ENCODE measurements at regions of chr9 and their contacts with region 1.

Region 1: GRCh38 chr9:34591248-34591916 is 1.9 kb upstream of the CNTFR start:
- DNase-seq: peak; percentile 84 to 91
- ATAC-seq: peak; percentile 84 to 95
- H3K4me3 ChIP-seq: no peak overlapping the region
- H3K27ac ChIP-seq: no peak overlapping the region
- H3K4me1 ChIP-seq: peaks cover 7% of the 10 kb centered on the region; the same call in 2 of the 3 replicates
- CTCF ChIP-seq: peak; percentile 81
- EP300 ChIP-seq: no peak
- POLR2A ChIP-seq: no peak
- RAD21 ChIP-seq: peak; percentile 89 to 94

Region 2: DNA sequence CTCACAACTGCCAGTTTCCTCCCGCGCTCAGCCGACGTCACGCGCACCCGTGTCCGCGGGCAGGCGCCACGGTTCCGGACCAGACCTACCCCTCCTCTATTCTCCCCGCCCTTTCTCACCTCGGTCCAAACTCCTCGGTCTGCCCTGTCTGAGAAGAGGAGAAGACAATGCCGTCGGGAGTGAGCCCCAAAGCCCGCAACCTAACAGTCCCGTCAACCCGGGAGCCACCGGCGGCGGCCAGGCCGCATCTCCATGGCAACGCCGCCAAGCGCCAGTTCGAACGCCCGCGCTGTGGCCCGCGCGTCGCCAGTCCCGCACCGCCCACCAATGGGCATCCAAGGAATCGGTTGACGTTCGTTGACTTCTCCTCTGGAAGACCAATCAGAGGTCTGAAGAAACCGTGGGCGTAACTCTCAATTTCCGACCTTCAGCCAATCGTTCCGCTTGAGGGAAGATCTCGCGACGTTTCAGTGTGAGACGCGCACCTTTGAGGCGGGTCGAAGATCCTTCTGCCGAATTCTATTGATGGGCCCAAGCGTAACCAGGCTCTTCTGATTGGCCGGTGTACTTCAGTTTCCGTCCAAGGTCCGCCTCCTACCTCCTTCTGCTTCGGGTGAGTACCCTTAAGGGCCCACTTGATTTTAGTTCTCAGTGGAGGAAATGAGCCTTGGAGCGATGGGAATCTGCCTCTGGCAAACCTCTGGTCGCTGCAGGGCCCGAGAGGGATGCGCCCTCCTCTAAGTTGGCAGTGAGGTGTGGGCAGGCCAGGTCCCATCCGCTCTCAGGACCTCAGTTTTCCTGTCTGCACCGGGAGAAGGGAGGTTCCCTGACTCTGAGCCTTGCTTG is 262.2 kb before region 1 on chr9 and contains the starts of genes KIF24 and NUDT2:
- CTCF ChIA-PET with region 1: interaction called, 39 read pairs
- POLR2A ChIA-PET with region 1: no interaction called
- DNase-seq: peak; percentile 96 to 100
- ATAC-seq: peak; percentile 94 to 97
- H3K4me3 ChIP-seq: peak within 1 kb of the TSS; percentile 97
- H3K27ac ChIP-seq: peak within 1 kb of the TSS; percentile 92 to 95
- H3K4me1 ChIP-seq: peaks cover 20% of the 10 kb centered on the region
- CTCF ChIP-seq: no peak
- EP300 ChIP-seq: no peak
- POLR2A ChIP-seq: peak; percentile 77
- RAD21 ChIP-seq: no peak
- polyA plus RNA-seq, gene KIF24: 4.3 and 4.4 TPM in 2 replicates
- polyA plus RNA-seq, gene NUDT2: 26.4 and 26.8 TPM in 2 replicates

Region 3: GRCh38 chr9:34403554-34404380 is 187.6 kb before region 1 on chr9:
- CTCF ChIA-PET with region 1: interaction called, 49 read pairs
- POLR2A ChIA-PET with region 1: no interaction called
- DNase-seq: peak; percentile 66 to 73
- ATAC-seq: peak; percentile 72 to 87; a peak in 5 of 6 replicates
- H3K4me3 ChIP-seq: no peak overlapping the region
- H3K27ac ChIP-seq: no peak overlapping the region
- H3K4me1 ChIP-seq: 0 out of 3 replicates have a peak, but pooled peaks cover 3% of the 10 kb centered on the region
- CTCF ChIP-seq: peak; percentile 96
- EP300 ChIP-seq: no peak
- POLR2A ChIP-seq: no peak
- RAD21 ChIP-seq: peak; percentile 76 to 87

Region 4: GRCh38 chr9:34451545-34451944 is 139.8 kb before region 1 on chr9:
- CTCF ChIA-PET with region 1: interaction called, 39 read pairs
- POLR2A ChIA-PET with region 1: no interaction called
- DNase-seq: no peak
- ATAC-seq: no peak
- H3K4me3 ChIP-seq: no peak overlapping the region
- H3K27ac ChIP-seq: no peak overlapping the region
- H3K4me1 ChIP-seq: peaks cover 7% of the 10 kb centered on the region; the same call in 1 of the 3 replicates
- CTCF ChIP-seq: no peak
- EP300 ChIP-seq: no peak
- POLR2A ChIP-seq: no peak
- RAD21 ChIP-seq: no peak

Region 5: GRCh38 chr9:34513567-34514214 is 77.7 kb before region 1 on chr9:
- CTCF ChIA-PET with region 1: interaction called, 18 read pairs
- POLR2A ChIA-PET with region 1: no interaction called
- DNase-seq: no peak
- ATAC-seq: no peak
- H3K4me3 ChIP-seq: no peak overlapping the region
- H3K27ac ChIP-seq: no peak overlapping the region
- H3K4me1 ChIP-seq: no peaks in the 10 kb centered on the region
- CTCF ChIP-seq: no peak
- EP300 ChIP-seq: no peak
- POLR2A ChIP-seq: no peak
- RAD21 ChIP-seq: no peak

Region 6: GRCh38 chr9:34559624-34560452 is 31.5 kb before region 1 on chr9:
- CTCF ChIA-PET with region 1: interaction called, 56 read pairs
- POLR2A ChIA-PET with region 1: no interaction called
- DNase-seq: peak; percentile 27 to 50
- ATAC-seq: peak; percentile 63 to 80; a peak in 5 of 6 replicates
- H3K4me3 ChIP-seq: no peak overlapping the region
- H3K27ac ChIP-seq: peak overlapping the region; percentile 45 to 48; a peak in 4 of 6 replicates
- H3K4me1 ChIP-seq: peaks cover 11% of the 10 kb centered on the region
- CTCF ChIP-seq: no peak
- EP300 ChIP-seq: no peak
- POLR2A ChIP-seq: no peak
- RAD21 ChIP-seq: no peak

Region 7: DNA sequence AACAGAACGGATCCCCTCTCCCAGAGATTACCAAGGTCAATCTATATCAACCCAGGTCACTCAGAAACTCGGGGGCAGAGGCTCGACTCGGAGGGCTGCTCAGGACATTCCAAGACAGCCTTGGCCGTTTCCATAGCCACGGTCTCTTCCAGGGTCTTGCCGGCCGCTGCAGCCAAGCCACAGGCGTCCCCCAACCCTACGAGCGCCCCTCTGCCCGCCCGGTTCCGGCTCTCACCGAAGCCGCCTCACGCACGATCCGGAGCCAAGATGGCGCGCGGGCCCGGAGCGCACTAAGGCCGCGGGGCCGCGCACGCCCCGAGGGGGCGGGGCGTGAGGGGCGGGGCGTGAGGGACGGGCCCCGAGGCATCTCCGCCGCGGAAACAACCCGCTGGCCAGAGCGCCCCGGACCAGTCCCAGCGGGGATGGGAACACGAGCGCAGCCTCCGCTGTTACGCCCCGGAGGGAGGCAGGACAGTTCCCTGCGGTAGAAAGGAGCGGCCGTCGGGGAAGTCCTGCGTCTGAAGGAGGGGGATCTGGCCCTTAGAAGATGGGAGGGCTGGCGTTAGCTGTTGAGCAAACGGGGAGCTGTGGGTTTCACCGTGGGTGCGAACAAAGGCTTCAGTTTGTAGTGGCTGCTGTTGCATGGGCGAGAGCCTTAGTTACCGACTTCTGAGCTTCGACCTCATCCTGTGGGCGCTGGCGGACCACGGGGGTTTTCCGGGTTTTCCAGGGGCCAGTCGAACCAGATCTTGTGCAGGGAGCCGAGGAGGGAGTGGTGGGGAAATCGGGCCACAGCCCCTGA is 20.6 kb after region 1 on chr9 and contains the start of gene RPP25L:
- CTCF ChIA-PET with region 1: interaction called, 101 read pairs
- POLR2A ChIA-PET with region 1: no interaction called
- DNase-seq: peak; percentile 78 to 86
- ATAC-seq: peak; percentile 85 to 95
- H3K4me3 ChIP-seq: peak within 1 kb of the TSS; percentile 75
- H3K27ac ChIP-seq: peak within 1 kb of the TSS; percentile 91 to 94
- H3K4me1 ChIP-seq: peaks cover 18% of the 10 kb centered on the region; the same call in 1 of the 3 replicates
- CTCF ChIP-seq: no peak; the same call in 2 of the 3 replicates
- EP300 ChIP-seq: no peak
- POLR2A ChIP-seq: peak; percentile 90
- RAD21 ChIP-seq: no peak
- polyA plus RNA-seq, gene RPP25L: 40.8 and 46.5 TPM in 2 replicates

Region 8: GRCh38 chr9:34693560-34693959 is 102.2 kb after region 1 on chr9:
- CTCF ChIA-PET with region 1: no interaction called
- POLR2A ChIA-PET with region 1: no interaction called
- DNase-seq: no peak
- ATAC-seq: no peak
- H3K4me3 ChIP-seq: no peak overlapping the region
- H3K27ac ChIP-seq: no peak overlapping the region
- H3K4me1 ChIP-seq: no peaks in the 10 kb centered on the region
- CTCF ChIP-seq: no peak
- EP300 ChIP-seq: no peak
- POLR2A ChIP-seq: no peak
- RAD21 ChIP-seq: no peak

Region 9: DNA sequence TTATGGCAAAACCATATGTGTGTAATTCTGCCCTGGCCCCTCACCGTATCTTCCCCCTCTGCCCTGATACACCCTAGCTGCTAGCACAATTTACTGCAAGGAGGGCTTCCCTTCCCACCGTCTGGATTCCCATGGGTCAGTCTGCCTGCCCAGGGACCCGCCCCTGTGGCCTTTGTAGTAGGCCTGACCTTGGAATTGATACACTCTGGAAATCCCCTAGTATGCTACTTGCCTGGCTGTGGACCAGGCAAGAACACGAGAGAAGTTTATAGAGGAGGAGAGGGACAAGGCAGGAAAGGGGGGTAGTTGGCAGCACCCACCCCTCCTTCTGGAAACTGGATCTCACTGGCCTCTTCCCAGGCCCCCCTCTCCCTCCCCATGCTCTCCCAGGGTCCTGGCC is 234.4 kb after region 1 on chr9:
- CTCF ChIA-PET with region 1: no interaction called
- POLR2A ChIA-PET with region 1: no interaction called
- DNase-seq: no peak
- ATAC-seq: no peak
- H3K4me3 ChIP-seq: no peak overlapping the region
- H3K27ac ChIP-seq: no peak overlapping the region
- H3K4me1 ChIP-seq: no peaks in the 10 kb centered on the region
- CTCF ChIP-seq: no peak
- EP300 ChIP-seq: no peak
- POLR2A ChIP-seq: no peak
- RAD21 ChIP-seq: no peak

Region 10: GRCh38 chr9:34927061-34927460 is 335.7 kb after region 1 on chr9:
- CTCF ChIA-PET with region 1: no interaction called
- POLR2A ChIA-PET with region 1: no interaction called
- DNase-seq: no peak
- ATAC-seq: no peak
- H3K4me3 ChIP-seq: no peak overlapping the region
- H3K27ac ChIP-seq: no peak overlapping the region
- H3K4me1 ChIP-seq: no peaks in the 10 kb centered on the region
- CTCF ChIP-seq: no peak
- EP300 ChIP-seq: no peak
- POLR2A ChIP-seq: no peak
- RAD21 ChIP-seq: no peak